ENCODE measurements at regions of chrX and their contacts with region 1.

Region 1: DNA sequence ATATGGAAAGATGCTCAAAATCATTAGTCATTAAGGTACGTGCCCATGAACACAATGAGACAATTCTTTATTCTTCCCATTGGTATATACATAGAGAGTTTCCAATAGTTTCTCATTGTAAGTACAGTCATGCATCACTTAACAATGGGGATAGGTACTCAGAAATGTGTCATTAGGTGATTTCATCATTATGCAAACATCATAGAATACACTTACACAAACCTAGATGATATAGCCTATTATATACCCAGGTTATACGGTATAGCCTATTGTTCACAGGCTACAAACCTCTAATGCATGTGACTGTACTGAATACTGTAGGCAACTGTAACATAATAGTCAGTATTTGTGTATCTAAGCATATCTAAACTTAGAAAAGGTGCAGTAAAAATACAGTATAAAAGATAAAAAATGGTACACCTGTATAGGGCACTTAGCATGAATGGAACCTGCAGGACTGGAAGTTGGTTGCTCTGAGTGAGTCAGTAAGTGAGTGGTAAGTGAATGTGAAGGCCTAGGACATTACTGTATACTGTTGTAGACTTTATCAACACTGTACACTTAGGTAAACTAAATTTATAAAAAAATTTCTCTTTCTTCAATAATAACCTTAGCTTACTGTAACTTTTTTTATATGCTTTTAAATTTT is 49.6 kb downstream of the KLHL13 start:
- DNase-seq: peak; percentile 79
- ATAC-seq: peak; percentile 95
- H3K4me3 ChIP-seq: no peak overlapping the region; the same call in 1 of the 2 replicates
- H3K27ac ChIP-seq: peak overlapping the region; percentile 98
- H3K4me1 ChIP-seq: peaks cover 18% of the 10 kb centered on the region
- H3K27me3 ChIP-seq: no peaks in the 10 kb centered on the region
- CTCF ChIP-seq: no peak

Region 2: GRCh38 chrX:117985241-117985640 is 81.8 kb before region 1 on chrX:
- CTCF ChIA-PET with region 1: no interaction called
- POLR2A ChIA-PET with region 1: no interaction called
- intact Hi-C with region 1: no loop called
- DNase-seq: peak; percentile 34
- ATAC-seq: no peak
- H3K4me3 ChIP-seq: no peak overlapping the region
- H3K27ac ChIP-seq: no peak overlapping the region
- H3K4me1 ChIP-seq: no peaks in the 10 kb centered on the region
- H3K27me3 ChIP-seq: no peaks in the 10 kb centered on the region
- CTCF ChIP-seq: 0 out of 2 replicates have a peak, but pooled peaks have one; percentile 29

Region 3: DNA sequence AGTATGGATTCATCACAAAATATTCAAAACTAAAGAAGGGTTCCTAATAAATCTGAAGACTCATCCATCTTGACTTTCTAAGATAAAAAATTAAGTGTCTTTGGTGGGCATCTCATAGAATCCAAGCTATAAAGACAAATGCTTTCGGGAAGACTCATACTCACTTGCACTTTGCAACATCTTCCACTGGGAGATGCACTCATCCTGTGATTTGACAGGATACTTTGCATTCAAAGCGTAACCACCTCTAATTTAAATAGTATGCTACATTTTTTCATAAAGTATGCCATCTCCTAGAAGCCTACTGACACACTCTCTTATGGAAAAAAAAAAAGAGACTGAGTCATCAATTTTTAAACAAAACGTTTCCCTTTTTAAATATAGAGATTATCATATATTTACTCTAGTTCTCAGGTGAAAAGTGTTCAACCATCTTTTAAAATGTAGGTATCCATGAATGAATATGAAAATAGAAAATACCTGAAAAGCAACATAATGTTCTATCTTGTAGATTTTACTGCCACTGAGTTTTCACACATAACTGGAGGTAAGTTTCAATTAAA is 70.0 kb before region 1 on chrX:
- CTCF ChIA-PET with region 1: no interaction called
- POLR2A ChIA-PET with region 1: no interaction called
- intact Hi-C with region 1: loop called (anchors 2 kb)
- DNase-seq: peak; percentile 65
- ATAC-seq: peak; percentile 72
- H3K4me3 ChIP-seq: no peak overlapping the region
- H3K27ac ChIP-seq: no peak overlapping the region
- H3K4me1 ChIP-seq: peaks cover 4% of the 10 kb centered on the region
- H3K27me3 ChIP-seq: no peaks in the 10 kb centered on the region
- CTCF ChIP-seq: peak; percentile 80

Region 4: GRCh38 chrX:118025226-118025625 is 41.8 kb before region 1 on chrX:
- CTCF ChIA-PET with region 1: no interaction called
- POLR2A ChIA-PET with region 1: no interaction called
- intact Hi-C with region 1: loop called (anchors 5 kb)
- DNase-seq: peak; percentile 33
- ATAC-seq: peak; percentile 80
- H3K4me3 ChIP-seq: 0 out of 2 replicates have a peak overlapping the region, but pooled peaks have one; percentile 29
- H3K27ac ChIP-seq: no peak overlapping the region
- H3K4me1 ChIP-seq: 0 out of 2 replicates have a peak, but pooled peaks cover 4% of the 10 kb centered on the region
- H3K27me3 ChIP-seq: no peaks in the 10 kb centered on the region
- CTCF ChIP-seq: no peak

Region 5: DNA sequence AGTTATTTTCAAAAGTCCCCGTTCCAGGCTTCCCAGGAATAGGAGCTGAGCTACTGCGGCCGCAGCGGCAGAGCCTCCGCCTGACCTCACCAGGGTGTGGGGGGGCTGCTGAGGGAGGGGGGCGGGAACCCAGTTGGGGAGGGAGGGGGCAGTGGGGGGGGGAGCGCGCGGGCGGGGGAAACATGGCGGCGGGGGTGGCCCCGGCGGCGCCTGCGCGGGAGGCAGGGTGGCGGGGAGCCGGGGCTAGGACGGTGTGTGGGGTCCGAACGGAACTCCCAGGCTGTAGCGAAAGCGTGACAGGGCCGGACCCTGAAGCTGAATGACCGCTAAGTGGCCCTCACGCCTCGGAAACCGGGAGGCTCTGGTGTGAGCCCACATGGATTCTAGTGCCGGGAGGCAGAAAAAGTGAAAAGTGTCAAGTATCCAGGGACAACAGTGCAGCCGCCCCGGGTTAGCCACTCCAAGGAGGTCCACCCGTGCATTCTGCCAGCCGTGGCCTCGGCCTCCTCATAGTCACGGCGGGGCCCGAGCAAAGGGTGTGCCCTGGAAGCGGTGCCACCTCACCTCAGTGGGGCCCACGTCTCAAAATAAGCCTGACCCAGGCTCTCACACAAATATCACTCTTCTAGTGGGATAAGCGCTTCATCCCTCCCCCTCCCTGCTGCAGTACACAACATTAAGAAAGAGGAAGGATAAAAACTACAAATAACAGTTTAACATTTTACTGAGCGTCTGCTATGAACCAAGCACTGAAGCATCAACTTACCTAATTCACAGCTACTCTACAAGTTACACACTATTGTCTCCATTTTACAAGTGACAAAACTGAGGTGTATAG is 49.9 kb after region 1 on chrX and contains the start of gene KLHL13:
- CTCF ChIA-PET with region 1: interaction called, 4 read pairs
- POLR2A ChIA-PET with region 1: no interaction called
- intact Hi-C with region 1: loop called (anchors 2 kb)
- DNase-seq: peak; percentile 33
- ATAC-seq: peak; percentile 66
- H3K4me3 ChIP-seq: peak within 1 kb of the TSS; percentile 86
- H3K27ac ChIP-seq: 0 out of 2 replicates have a peak within 1 kb of the TSS, but pooled peaks have one; percentile 11
- H3K4me1 ChIP-seq: peaks cover 16% of the 10 kb centered on the region
- H3K27me3 ChIP-seq: no peaks in the 10 kb centered on the region
- CTCF ChIP-seq: no peak
- total RNA-seq, gene KLHL13: 3.5 and 4.0 TPM in 2 replicates

Region 6: GRCh38 chrX:118212817-118213183 is 145.8 kb after region 1 on chrX:
- CTCF ChIA-PET with region 1: no interaction called
- POLR2A ChIA-PET with region 1: no interaction called
- intact Hi-C with region 1: loop called (anchors 5 kb)
- DNase-seq: no peak
- ATAC-seq: no peak
- H3K4me3 ChIP-seq: no peak overlapping the region
- H3K27ac ChIP-seq: no peak overlapping the region
- H3K4me1 ChIP-seq: peaks cover 17% of the 10 kb centered on the region
- H3K27me3 ChIP-seq: no peaks in the 10 kb centered on the region
- CTCF ChIP-seq: no peak

Region 7: DNA sequence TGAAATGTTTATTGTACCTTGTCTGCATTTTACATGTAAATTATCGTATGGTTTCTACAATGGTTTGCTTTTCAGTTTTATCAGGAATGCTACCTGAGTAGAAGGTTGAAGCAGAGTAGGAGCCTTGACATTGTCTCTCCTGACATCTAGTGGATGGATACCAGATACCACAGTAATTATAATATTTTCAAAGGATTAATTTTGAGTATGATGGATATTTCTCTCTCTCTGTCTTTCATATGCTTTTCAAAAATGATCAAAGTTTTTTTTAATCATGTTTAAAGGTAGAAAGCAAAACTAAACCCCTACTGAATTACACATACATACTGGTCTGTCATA is 159.1 kb after region 1 on chrX:
- CTCF ChIA-PET with region 1: no interaction called
- POLR2A ChIA-PET with region 1: no interaction called
- intact Hi-C with region 1: loop called (anchors 1 kb)
- DNase-seq: peak; percentile 45
- ATAC-seq: peak; percentile 74
- H3K4me3 ChIP-seq: peak overlapping the region; percentile 36; the same call in 1 of the 2 replicates
- H3K27ac ChIP-seq: peak overlapping the region; percentile 82
- H3K4me1 ChIP-seq: peaks cover 13% of the 10 kb centered on the region; the same call in 1 of the 2 replicates
- H3K27me3 ChIP-seq: no peaks in the 10 kb centered on the region
- CTCF ChIP-seq: peak; percentile 74

Region 8: GRCh38 chrX:118474586-118474985 is 407.6 kb after region 1 on chrX:
- CTCF ChIA-PET with region 1: no interaction called
- POLR2A ChIA-PET with region 1: no interaction called
- intact Hi-C with region 1: no loop called
- DNase-seq: no peak
- ATAC-seq: no peak
- H3K4me3 ChIP-seq: no peak overlapping the region
- H3K27ac ChIP-seq: no peak overlapping the region
- H3K4me1 ChIP-seq: no peaks in the 10 kb centered on the region
- H3K27me3 ChIP-seq: no peaks in the 10 kb centered on the region
- CTCF ChIP-seq: no peak

Measured in PC-3 (cell line).